Activated CD8-positive, alpha-beta T cell treated with anti-CD3 and anti-CD28 coated beads, Interleukin-2, amount 10 ng/mL, durations not matched to agents 7 days and 5 days (primary cell): ENCODE measurements at regions of chr3 and their contacts with region 1.

Region 1: DNA sequence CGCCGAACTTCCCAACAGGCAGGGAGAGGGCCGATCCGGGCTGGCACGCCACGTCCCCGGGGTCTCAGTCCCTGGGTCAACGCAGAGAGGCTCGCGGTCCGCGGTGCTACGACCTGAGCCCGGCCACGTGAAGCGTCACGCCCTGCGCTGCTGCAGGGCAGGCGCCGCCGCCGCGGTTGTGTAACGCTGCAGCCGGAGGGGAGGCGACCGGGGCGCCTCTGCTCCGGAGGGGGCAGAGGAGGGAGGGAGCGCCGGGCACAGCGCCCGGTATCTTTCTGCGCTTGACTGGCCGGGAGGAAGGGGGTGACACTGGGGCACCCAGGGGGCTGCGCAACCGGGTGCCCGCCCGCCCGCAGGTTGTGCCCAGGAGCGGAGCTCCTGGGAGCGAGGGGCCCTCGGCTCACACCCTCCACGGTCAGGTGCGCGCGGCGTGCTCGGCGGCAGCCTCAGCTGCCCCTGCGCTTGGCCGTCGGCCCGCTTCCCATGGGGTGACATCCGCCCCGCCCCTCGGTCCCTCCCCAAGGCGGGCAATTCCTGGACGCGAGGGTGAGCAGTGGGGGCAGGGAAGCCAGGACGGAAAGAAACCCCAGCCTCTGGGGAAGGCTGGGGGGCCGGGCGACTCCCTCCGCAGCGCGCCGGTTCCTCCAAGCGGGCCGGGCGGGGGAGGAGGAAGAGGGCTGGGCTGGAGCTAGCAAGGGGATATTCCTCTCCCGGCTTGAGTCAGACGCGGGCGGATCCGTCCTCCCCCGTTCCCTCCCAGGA is 852 bp upstream of the BHLHE40 start:
- DNase-seq: peak; percentile 95
- ATAC-seq: peak; percentile 59
- H3K4me3 Mint-ChIP-seq: peak overlapping the region; percentile 91
- H3K27ac Mint-ChIP-seq: peak overlapping the region; percentile 96
- H3K4me1 Mint-ChIP-seq: peaks cover 38% of the 10 kb centered on the region
- H3K27me3 Mint-ChIP-seq: no peaks in the 10 kb centered on the region

Region 2: DNA sequence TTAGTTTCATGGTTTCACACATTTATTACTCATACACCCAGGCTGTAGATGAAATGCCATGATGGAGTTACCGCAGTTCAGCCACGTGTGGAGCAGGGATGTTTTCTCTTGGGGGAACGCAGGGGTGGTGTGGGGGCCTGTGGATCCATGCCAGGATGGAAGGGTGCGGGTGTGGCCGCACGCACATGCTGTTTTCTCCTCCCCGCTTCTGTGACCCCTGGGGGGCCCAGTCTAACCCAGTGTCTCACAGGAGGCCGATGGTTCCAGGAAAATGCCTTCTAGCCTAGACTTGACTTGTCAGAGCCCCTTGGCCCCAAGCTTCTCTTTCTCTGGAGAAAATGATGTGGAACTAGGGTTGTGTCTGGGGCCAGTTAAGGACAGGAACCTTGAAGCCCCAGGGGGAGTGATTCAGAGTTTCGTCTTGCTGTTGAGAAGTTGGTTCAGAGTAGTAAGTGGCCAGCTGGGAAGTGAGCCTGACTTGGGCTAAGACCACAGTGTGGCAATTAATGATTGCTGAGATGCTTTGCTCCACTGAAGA is 239.6 kb before region 1 on chr3:
- CTCF ChIA-PET with region 1: interaction called, 7 read pairs
- POLR2A ChIA-PET with region 1: interaction called, 15 read pairs
- DNase-seq: no peak
- ATAC-seq: no peak
- H3K4me3 Mint-ChIP-seq: peak overlapping the region; percentile 6
- H3K27ac Mint-ChIP-seq: peak overlapping the region; percentile 97
- H3K4me1 Mint-ChIP-seq: peaks cover 84% of the 10 kb centered on the region
- H3K27me3 Mint-ChIP-seq: no peaks in the 10 kb centered on the region

Region 3: DNA sequence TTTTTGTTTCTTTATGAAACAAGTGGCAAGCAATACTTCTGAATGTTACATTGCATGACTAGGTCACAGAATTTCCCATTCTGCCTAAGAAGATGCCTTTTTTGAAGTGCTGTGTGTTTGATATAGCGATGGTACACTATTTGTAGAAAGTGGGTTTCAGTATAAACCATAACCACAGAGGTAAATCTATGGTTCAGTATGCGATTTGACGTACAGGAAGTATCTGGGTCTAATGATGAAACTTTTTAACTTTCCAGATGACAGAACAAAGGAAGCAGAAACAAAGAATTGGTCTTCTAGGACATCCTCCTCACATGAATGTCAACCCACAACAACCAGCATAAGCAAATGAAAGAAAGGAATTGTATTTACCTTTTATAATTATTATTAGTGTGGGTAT is 132.5 kb before region 1 on chr3:
- CTCF ChIA-PET with region 1: interaction called, 48 read pairs
- POLR2A ChIA-PET with region 1: interaction called, 737 read pairs
- DNase-seq: no peak
- ATAC-seq: peak; percentile 65
- H3K4me3 Mint-ChIP-seq: peak overlapping the region; percentile 36
- H3K27ac Mint-ChIP-seq: peak overlapping the region; percentile 87
- H3K4me1 Mint-ChIP-seq: peaks cover 97% of the 10 kb centered on the region
- H3K27me3 Mint-ChIP-seq: no peaks in the 10 kb centered on the region

Region 4: GRCh38 chr3:4906107-4906621 is 72.2 kb before region 1 on chr3:
- CTCF ChIA-PET with region 1: interaction called, 10 read pairs
- POLR2A ChIA-PET with region 1: interaction called, 41 read pairs
- DNase-seq: no peak
- ATAC-seq: peak; percentile 15
- H3K4me3 Mint-ChIP-seq: no peak overlapping the region
- H3K27ac Mint-ChIP-seq: no peak overlapping the region
- H3K4me1 Mint-ChIP-seq: peaks cover 67% of the 10 kb centered on the region
- H3K27me3 Mint-ChIP-seq: no peaks in the 10 kb centered on the region

Region 5: GRCh38 chr3:5002174-5002870 is 23.9 kb after region 1 on chr3:
- CTCF ChIA-PET with region 1: interaction called, 13 read pairs
- POLR2A ChIA-PET with region 1: interaction called, 450 read pairs
- DNase-seq: peak; percentile 66
- ATAC-seq: peak; percentile 50
- H3K4me3 Mint-ChIP-seq: peak overlapping the region; percentile 47
- H3K27ac Mint-ChIP-seq: peak overlapping the region; percentile 84
- H3K4me1 Mint-ChIP-seq: peaks cover 85% of the 10 kb centered on the region
- H3K27me3 Mint-ChIP-seq: no peaks in the 10 kb centered on the region

Region 6: GRCh38 chr3:5057857-5058324 is 79.5 kb after region 1 on chr3:
- CTCF ChIA-PET with region 1: interaction called, 50 read pairs
- POLR2A ChIA-PET with region 1: interaction called, 20 read pairs
- DNase-seq: peak; percentile 90
- ATAC-seq: peak; percentile 95
- H3K4me3 Mint-ChIP-seq: no peak overlapping the region
- H3K27ac Mint-ChIP-seq: no peak overlapping the region
- H3K4me1 Mint-ChIP-seq: peaks cover 59% of the 10 kb centered on the region
- H3K27me3 Mint-ChIP-seq: peaks cover 7% of the 10 kb centered on the region